Cardiac septum (tissue), 1 donor: ENCODE measurements at regions of chr12 and their contacts with region 1.

Region 1: GRCh38 chr12:6335451-6336078 is 6.3 kb downstream of the TNFRSF1A start:
- DNase-seq: peak; percentile 94

Region 2: DNA sequence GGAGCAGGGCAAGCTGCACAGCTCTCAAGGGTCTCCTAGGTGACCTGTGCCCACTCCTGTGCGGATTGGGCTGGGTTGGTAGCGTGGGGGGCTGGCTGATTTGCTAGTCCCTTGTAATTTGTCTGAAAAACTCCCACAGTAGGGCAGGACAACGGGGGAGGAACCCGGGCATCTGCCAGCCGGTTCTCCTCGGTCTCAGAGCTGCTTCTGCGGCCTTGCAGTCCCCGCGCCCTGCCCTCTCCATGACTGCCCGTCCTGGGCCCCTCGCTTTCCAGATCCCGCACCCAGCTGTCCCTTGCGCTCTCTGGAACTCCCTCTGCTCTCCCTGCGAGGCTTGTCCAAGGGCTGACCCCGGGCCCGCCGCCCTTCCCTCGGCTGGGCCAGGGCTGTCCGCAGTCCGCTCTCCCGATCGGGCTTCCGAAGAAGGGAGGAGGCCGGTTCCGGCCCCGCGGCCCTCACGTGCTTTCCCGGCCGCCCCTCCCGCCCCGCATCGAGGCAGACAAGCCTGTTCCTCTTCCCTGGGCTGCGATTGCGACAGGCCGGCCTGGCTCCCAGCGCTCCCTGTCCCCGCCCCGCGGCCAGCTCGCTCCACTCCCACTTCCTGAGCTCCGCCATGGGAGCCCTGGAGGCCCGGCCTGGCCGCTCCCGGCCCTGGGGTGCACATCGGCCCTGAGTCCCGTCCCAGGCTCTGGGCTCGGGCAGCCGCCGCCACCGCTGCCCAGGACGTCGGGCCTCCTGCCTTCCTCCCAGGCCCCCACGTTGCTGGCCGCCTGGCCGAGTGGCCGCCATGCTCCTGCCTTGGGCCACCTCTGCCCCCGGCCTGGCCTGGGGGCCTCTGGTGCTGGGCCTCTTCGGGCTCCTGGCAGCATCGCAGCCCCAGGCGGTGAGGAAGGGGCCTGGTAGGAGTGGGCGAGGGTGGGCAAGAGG is 48.3 kb after region 1 on chr12 and contains the start of gene LTBR:
- intact Hi-C with region 1: loop called (anchors 1 kb)
- DNase-seq: peak; percentile 99
- total RNA-seq, gene LTBR: 29.4 TPM

Region 3: DNA sequence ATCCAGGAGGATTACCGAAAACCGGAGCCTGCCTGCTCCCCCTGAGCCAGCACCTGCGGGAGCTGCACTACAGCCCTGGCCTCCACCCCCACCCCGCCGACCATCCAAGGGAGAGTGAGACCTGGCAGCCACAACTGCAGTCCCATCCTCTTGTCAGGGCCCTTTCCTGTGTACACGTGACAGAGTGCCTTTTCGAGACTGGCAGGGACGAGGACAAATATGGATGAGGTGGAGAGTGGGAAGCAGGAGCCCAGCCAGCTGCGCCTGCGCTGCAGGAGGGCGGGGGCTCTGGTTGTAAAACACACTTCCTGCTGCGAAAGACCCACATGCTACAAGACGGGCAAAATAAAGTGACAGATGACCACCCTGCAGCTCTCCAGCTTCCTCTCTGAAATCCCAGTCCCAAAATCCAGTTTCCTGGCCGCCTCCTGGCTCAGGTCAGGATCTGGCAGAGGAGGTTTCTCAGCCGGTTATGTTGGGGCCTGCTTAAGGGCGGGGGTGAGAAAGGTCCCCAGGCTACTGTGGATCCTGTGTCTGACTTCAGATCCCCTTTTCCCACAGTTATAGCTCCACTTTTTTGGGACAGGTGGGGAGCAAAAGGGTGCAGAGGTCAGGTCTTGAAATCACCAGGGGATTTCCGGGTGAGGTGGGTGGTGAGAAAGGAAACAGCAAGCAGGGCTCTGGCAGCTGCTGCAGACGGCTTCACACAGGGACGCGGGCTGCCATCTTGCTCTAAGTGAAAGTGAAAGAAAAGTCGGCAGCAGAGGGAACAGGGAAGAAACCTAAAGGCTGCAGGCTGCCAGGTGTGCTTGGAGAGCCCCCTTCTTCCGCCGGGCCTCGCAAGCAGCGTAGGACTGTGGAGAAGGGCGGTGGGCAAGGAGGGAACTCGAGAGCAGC is 116.0 kb after region 1 on chr12 and contains the start of gene TAPBPL:
- intact Hi-C with region 1: loop called (anchors 5 kb)
- DNase-seq: peak; percentile 92
- total RNA-seq, gene TAPBPL: 17.2 TPM

Region 4: GRCh38 chr12:6554168-6555017 is 218.8 kb after region 1 on chr12:
- intact Hi-C with region 1: loop called (anchors 5 kb)
- DNase-seq: peak; percentile 92